HepG2 (cell line): ENCODE measurements at regions of chr7 and their contacts with region 1.

Region 1: GRCh38 chr7:135414850-135415439 is 95.0 kb downstream of the CNOT4 start:
- DNase-seq: peak; percentile 74
- ATAC-seq: peak; percentile 85
- H3K4me3 ChIP-seq: no peak overlapping the region
- H3K27ac ChIP-seq: no peak overlapping the region
- H3K4me1 ChIP-seq: peaks cover 18% of the 10 kb centered on the region
- H3K27me3 ChIP-seq: no peaks in the 10 kb centered on the region
- CTCF ChIP-seq: peak; percentile 68
- EP300 ChIP-seq: no peak
- POLR2A ChIP-seq: no peak
- RAD21 ChIP-seq: no peak

Region 2: GRCh38 chr7:135335628-135336139 is 79.3 kb before region 1 on chr7:
- CTCF ChIA-PET with region 1: no interaction called
- POLR2A ChIA-PET with region 1: no interaction called
- in situ Hi-C with region 1: no loop called
- intact Hi-C with region 1: no loop called
- DNase-seq: peak; percentile 80
- ATAC-seq: peak; percentile 98
- H3K4me3 ChIP-seq: no peak overlapping the region
- H3K27ac ChIP-seq: no peak overlapping the region
- H3K4me1 ChIP-seq: 0 out of 2 replicates have a peak, but pooled peaks cover under 1% of the 10 kb centered on the region
- H3K27me3 ChIP-seq: no peaks in the 10 kb centered on the region
- CTCF ChIP-seq: peak; percentile 95
- EP300 ChIP-seq: no peak
- POLR2A ChIP-seq: no peak
- RAD21 ChIP-seq: peak; percentile 93

Region 3: DNA sequence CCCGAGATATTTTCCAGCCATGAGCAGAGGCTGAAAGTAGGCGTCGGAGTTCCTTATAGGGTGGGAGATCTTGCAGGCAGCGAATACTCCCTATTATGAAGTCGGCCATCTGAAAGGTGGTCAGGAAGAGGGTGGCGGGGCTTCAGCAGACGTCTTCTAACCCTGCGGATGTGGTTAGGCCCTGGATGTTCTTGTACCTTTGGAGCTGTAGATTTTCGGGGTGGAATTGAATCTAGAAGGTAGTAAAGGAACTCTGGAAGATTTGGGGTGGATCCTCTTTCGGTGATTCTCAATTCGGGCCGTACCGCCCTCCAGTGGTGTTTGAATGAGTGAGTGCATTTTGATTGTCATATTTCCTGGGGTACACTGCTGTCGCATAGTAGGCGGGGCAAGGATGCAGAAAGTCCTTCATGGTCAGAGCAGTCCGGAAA is 143.4 kb after region 1 on chr7:
- CTCF ChIA-PET with region 1: interaction called, 4 read pairs
- POLR2A ChIA-PET with region 1: no interaction called
- in situ Hi-C with region 1: no loop called
- intact Hi-C with region 1: loop called (anchors 5 kb)
- DNase-seq: peak; percentile 71
- ATAC-seq: peak; percentile 72
- H3K4me3 ChIP-seq: peak overlapping the region; percentile 72 to 86 (median 75)
- H3K27ac ChIP-seq: peak overlapping the region; percentile 93
- H3K4me1 ChIP-seq: peaks cover 30% of the 10 kb centered on the region
- H3K27me3 ChIP-seq: no peaks in the 10 kb centered on the region; a peak in 1 of 5 replicates
- CTCF ChIP-seq: peak; percentile 72
- EP300 ChIP-seq: no peak
- POLR2A ChIP-seq: no peak
- RAD21 ChIP-seq: no peak